Activated CD8-positive, alpha-beta T cell treated with anti-CD3 and anti-CD28 coated beads for 36 hours (primary cell): ENCODE measurements at regions of chr5 and their contacts with region 1.

Region 1: GRCh38 chr5:177403792-177404640 is 3.6 kb upstream of the PFN3 start:
- DNase-seq: peak; percentile 89
- ATAC-seq: peak; percentile 87
- H3K4me3 Mint-ChIP-seq: peak overlapping the region; percentile 73
- H3K27ac Mint-ChIP-seq: peak overlapping the region; percentile 47
- H3K4me1 Mint-ChIP-seq: peaks cover 26% of the 10 kb centered on the region
- H3K27me3 Mint-ChIP-seq: peaks cover 23% of the 10 kb centered on the region
- CTCF ChIP-seq: peak; percentile 83

Region 2: DNA sequence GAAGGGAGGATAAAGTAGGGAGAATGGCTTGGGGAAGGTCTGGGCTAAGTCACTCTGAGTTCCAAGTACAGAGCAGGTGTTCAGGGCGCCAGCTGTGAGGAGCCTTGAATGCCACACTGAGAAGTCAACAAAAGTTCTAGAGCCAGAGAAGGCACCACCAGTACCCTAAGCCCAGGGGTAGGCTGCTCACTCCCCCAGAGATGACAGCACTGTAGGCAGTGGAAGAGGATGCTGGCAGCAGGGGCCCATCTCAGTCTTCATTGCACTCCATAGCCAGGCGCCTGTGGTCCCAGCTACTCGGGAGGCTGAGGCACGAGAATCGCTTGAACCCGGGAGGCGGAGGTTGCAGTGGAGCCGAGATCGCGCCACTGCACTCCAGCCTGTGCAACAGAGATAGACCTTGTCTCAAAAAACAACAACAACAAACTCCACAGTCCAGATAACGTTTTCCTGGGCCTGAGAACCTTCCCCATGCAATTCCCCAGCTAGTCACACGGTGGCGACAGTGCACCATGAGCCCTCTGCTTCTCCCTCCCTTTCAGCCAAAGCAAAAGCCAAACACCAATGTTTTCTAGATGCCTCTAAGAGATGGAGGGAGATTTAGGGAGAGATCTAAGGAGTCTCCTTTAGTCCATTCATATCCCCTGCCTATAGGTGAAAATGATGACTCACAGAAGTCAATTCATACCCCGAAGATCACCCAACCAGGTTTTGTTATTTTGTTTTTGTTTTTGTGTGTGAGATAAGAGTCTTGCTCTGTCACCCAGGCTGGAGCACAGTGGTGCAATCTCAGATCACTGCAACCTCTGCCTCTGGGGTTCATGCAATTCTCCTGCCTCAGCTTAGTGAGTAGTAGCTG is 290.2 kb before region 1 on chr5:
- CTCF ChIA-PET with region 1: interaction called, 17 read pairs
- POLR2A ChIA-PET with region 1: interaction called, 3 read pairs
- intact Hi-C with region 1: no loop called
- DNase-seq: peak; percentile 86
- ATAC-seq: peak; percentile 72
- H3K4me3 Mint-ChIP-seq: no peak overlapping the region
- H3K27ac Mint-ChIP-seq: no peak overlapping the region
- H3K4me1 Mint-ChIP-seq: peaks cover 18% of the 10 kb centered on the region
- H3K27me3 Mint-ChIP-seq: no peaks in the 10 kb centered on the region
- CTCF ChIP-seq: peak; percentile 98

Region 3: DNA sequence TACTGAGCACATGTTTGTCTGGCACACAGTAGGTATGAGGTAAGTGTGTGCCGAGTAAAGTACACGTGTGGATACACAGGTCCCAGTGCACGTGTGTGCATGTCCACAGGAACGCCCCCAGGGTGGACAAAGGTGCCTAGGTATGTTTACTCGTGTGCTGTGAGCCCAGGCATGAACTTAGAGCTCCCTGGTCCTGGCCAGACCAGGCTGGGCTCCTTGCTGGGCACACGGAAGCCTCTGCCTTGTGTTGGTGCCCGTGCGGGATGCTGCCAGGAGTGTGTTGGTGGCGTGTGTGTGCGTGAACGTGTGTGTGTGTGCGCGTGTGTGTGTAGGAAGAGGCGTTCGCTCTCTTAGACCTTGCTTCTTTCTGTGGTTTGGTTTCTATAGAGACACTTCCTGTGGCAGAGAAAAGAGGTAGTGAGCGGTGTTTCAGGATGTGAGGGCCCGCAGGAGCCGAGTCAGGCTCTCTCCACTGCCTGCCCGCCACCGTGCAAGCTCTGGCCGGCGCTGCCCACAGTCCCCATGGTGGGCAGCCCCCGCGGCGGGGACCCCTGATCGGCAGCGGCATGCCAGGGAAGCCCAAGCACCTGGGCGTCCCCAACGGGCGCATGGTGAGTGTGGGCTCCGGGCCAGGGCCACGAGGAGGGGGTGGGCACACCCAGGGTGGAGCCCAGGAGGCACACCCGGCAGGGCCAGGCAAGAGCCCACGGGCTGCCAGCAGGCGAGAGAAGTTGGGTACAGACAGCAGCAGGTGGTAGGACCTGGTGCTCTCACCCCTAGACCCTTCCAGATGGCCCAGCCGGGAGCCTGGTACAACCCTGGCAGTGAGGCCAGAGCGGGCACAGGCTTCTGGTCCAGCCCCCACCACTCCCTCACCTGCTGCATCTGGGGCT is 46.3 kb before region 1 on chr5 and contains the start of gene RGS14:
- CTCF ChIA-PET with region 1: interaction called, 13 read pairs
- POLR2A ChIA-PET with region 1: no interaction called
- intact Hi-C with region 1: no loop called
- DNase-seq: peak; percentile 75
- ATAC-seq: peak; percentile 87
- H3K4me3 Mint-ChIP-seq: peak within 1 kb of the TSS; percentile 89
- H3K27ac Mint-ChIP-seq: peak within 1 kb of the TSS; percentile 84
- H3K4me1 Mint-ChIP-seq: peaks cover 75% of the 10 kb centered on the region
- H3K27me3 Mint-ChIP-seq: no peaks in the 10 kb centered on the region
- CTCF ChIP-seq: no peak
- total RNA-seq, gene RGS14: 50.4 to 52.5 TPM

Region 4: DNA sequence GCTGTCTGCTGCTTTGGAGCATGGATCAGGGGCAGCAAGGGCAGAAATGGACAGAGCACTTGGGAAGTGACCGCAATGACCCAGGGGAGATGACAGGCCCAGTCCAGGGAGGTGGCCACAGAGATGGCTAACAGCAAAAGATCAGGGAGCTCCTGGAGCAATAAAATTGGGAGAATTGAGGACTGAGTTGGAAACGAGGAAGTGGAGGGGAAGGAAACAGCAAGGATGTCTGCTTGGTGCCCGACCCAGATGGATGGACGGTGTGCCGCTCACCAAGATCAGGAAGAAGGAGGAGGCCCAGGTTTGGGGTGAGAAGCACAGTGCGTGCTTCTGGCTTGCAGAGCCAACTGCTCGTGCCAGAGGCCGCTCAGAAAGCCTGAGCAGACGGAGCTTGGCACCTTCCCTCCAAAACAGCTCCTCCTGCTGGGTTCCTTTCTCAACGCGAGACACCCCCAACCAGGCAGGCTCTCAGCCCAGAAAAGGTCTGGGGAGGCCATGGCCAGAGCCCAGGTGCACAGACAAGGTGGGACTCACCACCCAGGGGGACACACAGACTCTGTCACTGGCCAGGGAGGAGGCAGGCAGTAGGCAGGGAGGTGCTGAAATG is 21.5 kb before region 1 on chr5:
- CTCF ChIA-PET with region 1: interaction called, 12 read pairs
- POLR2A ChIA-PET with region 1: interaction called, 5 read pairs
- intact Hi-C with region 1: no loop called
- DNase-seq: peak; percentile 39
- ATAC-seq: no peak
- H3K4me3 Mint-ChIP-seq: no peak overlapping the region
- H3K27ac Mint-ChIP-seq: no peak overlapping the region
- H3K4me1 Mint-ChIP-seq: peaks cover 23% of the 10 kb centered on the region
- H3K27me3 Mint-ChIP-seq: no peaks in the 10 kb centered on the region
- CTCF ChIP-seq: peak; percentile 13

Region 5: GRCh38 chr5:177431317-177432142 is 27.5 kb after region 1 on chr5:
- CTCF ChIA-PET with region 1: interaction called, 159 read pairs
- POLR2A ChIA-PET with region 1: interaction called, 45 read pairs
- intact Hi-C with region 1: no loop called
- DNase-seq: peak; percentile 92
- ATAC-seq: peak; percentile 37
- H3K4me3 Mint-ChIP-seq: peak overlapping the region; percentile 97
- H3K27ac Mint-ChIP-seq: peak overlapping the region; percentile 98
- H3K4me1 Mint-ChIP-seq: peaks cover 57% of the 10 kb centered on the region
- H3K27me3 Mint-ChIP-seq: no peaks in the 10 kb centered on the region
- CTCF ChIP-seq: no peak

Region 6: GRCh38 chr5:177454397-177455035 is 50.5 kb after region 1 on chr5:
- CTCF ChIA-PET with region 1: interaction called, 415 read pairs
- POLR2A ChIA-PET with region 1: interaction called, 72 read pairs
- intact Hi-C with region 1: loop called (anchors 2 kb)
- DNase-seq: peak; percentile 94
- ATAC-seq: peak; percentile 41
- H3K4me3 Mint-ChIP-seq: peak overlapping the region; percentile 83
- H3K27ac Mint-ChIP-seq: peak overlapping the region; percentile 80
- H3K4me1 Mint-ChIP-seq: peaks cover 27% of the 10 kb centered on the region
- H3K27me3 Mint-ChIP-seq: no peaks in the 10 kb centered on the region
- CTCF ChIP-seq: peak; percentile 79

Region 7: DNA sequence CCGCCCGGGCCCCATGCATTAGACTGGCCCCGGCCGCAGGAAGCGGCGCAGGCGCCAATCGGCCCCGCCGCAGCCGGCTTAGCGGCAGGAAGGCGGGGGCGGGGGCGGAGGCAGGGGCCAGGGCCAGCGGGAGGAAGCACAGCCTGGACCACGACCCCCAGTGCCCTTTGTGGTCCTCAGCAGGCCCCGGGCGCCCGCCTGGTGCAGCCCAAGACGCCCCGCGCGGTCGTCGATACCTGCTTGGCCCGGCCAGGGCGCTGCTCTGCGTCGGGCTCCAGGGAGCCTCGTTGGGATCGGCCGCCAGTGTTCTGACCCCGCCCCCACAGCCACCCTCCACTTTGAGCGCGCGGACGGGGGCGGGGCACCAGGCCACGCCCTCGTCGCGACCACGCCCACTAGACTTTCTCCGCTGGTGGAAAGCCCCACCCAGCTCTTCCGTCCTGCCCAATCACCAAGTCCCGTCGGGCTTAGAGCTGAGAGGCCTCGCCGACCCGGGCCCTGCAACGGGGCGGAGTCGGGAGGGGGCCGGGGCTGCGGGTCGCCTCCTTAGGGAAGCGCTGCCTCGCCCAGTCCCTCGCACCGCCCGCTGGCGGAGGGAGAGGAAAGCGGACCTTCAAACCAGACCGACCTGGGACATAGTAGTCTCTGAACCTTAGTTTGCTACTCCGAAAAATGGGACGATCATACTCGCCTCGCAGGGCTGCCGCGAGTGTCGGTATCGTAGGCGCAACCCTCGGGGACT is 93.4 kb after region 1 on chr5 and contains the start of gene PDLIM7:
- CTCF ChIA-PET with region 1: interaction called, 43 read pairs
- POLR2A ChIA-PET with region 1: no interaction called
- intact Hi-C with region 1: no loop called
- DNase-seq: peak; percentile 97
- ATAC-seq: peak; percentile 82
- H3K4me3 Mint-ChIP-seq: peak within 1 kb of the TSS; percentile 79
- H3K27ac Mint-ChIP-seq: peak within 1 kb of the TSS; percentile 68
- H3K4me1 Mint-ChIP-seq: peaks cover 38% of the 10 kb centered on the region
- H3K27me3 Mint-ChIP-seq: peaks cover 11% of the 10 kb centered on the region
- CTCF ChIP-seq: no peak
- total RNA-seq, gene PDLIM7: 68.4 to 73.0 TPM